CD8-positive, alpha-beta T cell (primary cell): ENCODE measurements at regions of chr15 and their contacts with region 1.

Region 1: DNA sequence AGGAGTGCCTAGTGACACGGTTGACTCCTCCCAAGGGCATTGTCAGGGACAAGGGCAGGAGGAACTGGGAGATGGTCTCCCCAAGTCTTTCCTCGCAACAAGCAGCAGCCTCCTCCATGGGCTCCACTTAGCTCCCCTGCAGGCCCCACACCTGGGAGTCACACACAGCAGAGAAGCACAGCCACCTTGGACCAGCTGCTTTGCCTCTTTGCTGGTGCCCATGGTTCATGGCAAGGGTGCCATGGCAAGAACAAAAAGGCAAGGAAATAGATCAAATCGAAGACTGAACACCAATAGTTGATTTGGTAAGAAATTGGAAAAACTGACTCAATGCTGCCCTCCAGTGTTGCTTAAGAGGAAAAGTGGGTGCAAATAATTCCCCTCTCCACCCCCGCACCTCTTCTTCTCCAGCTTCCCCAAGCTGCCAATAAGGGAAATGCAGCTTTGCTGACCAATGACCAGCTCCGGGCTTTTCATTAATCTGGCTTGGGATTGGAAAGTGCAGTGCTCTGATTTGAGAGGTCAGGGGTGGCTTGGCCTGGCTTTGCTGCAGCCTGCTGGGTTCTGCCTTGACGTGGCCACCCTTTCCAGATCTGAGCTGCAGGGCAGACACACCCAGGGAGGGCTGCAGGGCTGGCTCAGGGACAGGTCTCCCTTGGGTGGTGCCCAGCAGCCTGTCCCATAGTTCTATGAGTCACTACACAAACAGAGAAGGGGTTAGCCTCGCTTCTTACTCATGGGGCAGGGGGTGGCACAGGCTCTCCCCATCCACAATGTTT is 162.0 kb downstream of the KLF13 start:
- DNase-seq: peak in 6 of 9 experiments; percentile 29 to 88 (median 56)
- ATAC-seq: peak; percentile 59
- H3K4me3 ChIP-seq: no peak overlapping the region
- H3K4me3 Mint-ChIP-seq: no peak overlapping the region
- H3K27ac ChIP-seq: no peak overlapping the region
- H3K27ac Mint-ChIP-seq: no peak overlapping the region
- H3K4me1 ChIP-seq: peaks cover 30% of the 10 kb centered on the region
- H3K4me1 Mint-ChIP-seq: peaks cover 39% of the 10 kb centered on the region
- H3K27me3 ChIP-seq: no peaks in the 10 kb centered on the region
- H3K27me3 Mint-ChIP-seq: no peaks in the 10 kb centered on the region
- CTCF ChIP-seq: peak; percentile 88

Region 2: GRCh38 chr15:31215490-31216214 is 273.0 kb before region 1 on chr15:
- CTCF ChIA-PET with region 1: interaction called, 95 read pairs
- POLR2A ChIA-PET with region 1: interaction called, 8 read pairs
- intact Hi-C with region 1: loop called (anchors 1 kb)
- DNase-seq: peak; percentile 56 to 91 (median 84)
- ATAC-seq: peak; percentile 76
- H3K4me3 ChIP-seq: peak overlapping the region; percentile 32 to 55
- H3K4me3 Mint-ChIP-seq: peak overlapping the region; percentile 56
- H3K27ac ChIP-seq: peak overlapping the region; percentile 56 to 75
- H3K27ac Mint-ChIP-seq: peak overlapping the region; percentile 83
- H3K4me1 ChIP-seq: peaks cover 21% of the 10 kb centered on the region
- H3K4me1 Mint-ChIP-seq: peaks cover 30% of the 10 kb centered on the region
- H3K27me3 ChIP-seq: no peaks in the 10 kb centered on the region
- H3K27me3 Mint-ChIP-seq: no peaks in the 10 kb centered on the region
- CTCF ChIP-seq: peak; percentile 73

Region 3: GRCh38 chr15:31317421-31318327 is 170.9 kb before region 1 on chr15:
- CTCF ChIA-PET with region 1: interaction called, 14 read pairs
- POLR2A ChIA-PET with region 1: no interaction called
- intact Hi-C with region 1: no loop called
- DNase-seq: no peak
- ATAC-seq: no peak
- H3K4me3 ChIP-seq: no peak overlapping the region
- H3K4me3 Mint-ChIP-seq: no peak overlapping the region
- H3K27ac ChIP-seq: no peak overlapping the region
- H3K27ac Mint-ChIP-seq: no peak overlapping the region
- H3K4me1 ChIP-seq: peaks cover 23% of the 10 kb centered on the region
- H3K4me1 Mint-ChIP-seq: peaks cover 39% of the 10 kb centered on the region
- H3K27me3 ChIP-seq: no peaks in the 10 kb centered on the region
- H3K27me3 Mint-ChIP-seq: no peaks in the 10 kb centered on the region
- CTCF ChIP-seq: no peak

Region 4: GRCh38 chr15:31352911-31353811 is 135.5 kb before region 1 on chr15:
- CTCF ChIA-PET with region 1: interaction called, 50 read pairs
- POLR2A ChIA-PET with region 1: interaction called, 38 read pairs
- intact Hi-C with region 1: loop called (anchors 5 kb)
- DNase-seq: peak in 6 of 9 experiments; percentile 56 to 88 (median 71)
- ATAC-seq: peak; percentile 61
- H3K4me3 ChIP-seq: peak overlapping the region; percentile 19 to 33
- H3K4me3 Mint-ChIP-seq: peak overlapping the region; percentile 79
- H3K27ac ChIP-seq: peak overlapping the region; percentile 58 to 78
- H3K27ac Mint-ChIP-seq: peak overlapping the region; percentile 97
- H3K4me1 ChIP-seq: peaks cover 100% of the 10 kb centered on the region
- H3K4me1 Mint-ChIP-seq: peaks cover 98% of the 10 kb centered on the region
- H3K27me3 ChIP-seq: no peaks in the 10 kb centered on the region
- H3K27me3 Mint-ChIP-seq: no peaks in the 10 kb centered on the region
- CTCF ChIP-seq: no peak

Region 5: GRCh38 chr15:31396881-31397560 is 91.6 kb before region 1 on chr15:
- CTCF ChIA-PET with region 1: interaction called, 23 read pairs
- POLR2A ChIA-PET with region 1: interaction called, 9 read pairs
- intact Hi-C with region 1: loop called (anchors 2 to 5 kb)
- DNase-seq: peak in 1 of 9 experiments; percentile 42
- ATAC-seq: no peak
- H3K4me3 ChIP-seq: no peak overlapping the region
- H3K4me3 Mint-ChIP-seq: no peak overlapping the region
- H3K27ac ChIP-seq: no peak overlapping the region
- H3K27ac Mint-ChIP-seq: no peak overlapping the region
- H3K4me1 ChIP-seq: peaks cover 39% of the 10 kb centered on the region
- H3K4me1 Mint-ChIP-seq: peaks cover 48% of the 10 kb centered on the region
- H3K27me3 ChIP-seq: no peaks in the 10 kb centered on the region
- H3K27me3 Mint-ChIP-seq: no peaks in the 10 kb centered on the region
- CTCF ChIP-seq: no peak

Region 6: DNA sequence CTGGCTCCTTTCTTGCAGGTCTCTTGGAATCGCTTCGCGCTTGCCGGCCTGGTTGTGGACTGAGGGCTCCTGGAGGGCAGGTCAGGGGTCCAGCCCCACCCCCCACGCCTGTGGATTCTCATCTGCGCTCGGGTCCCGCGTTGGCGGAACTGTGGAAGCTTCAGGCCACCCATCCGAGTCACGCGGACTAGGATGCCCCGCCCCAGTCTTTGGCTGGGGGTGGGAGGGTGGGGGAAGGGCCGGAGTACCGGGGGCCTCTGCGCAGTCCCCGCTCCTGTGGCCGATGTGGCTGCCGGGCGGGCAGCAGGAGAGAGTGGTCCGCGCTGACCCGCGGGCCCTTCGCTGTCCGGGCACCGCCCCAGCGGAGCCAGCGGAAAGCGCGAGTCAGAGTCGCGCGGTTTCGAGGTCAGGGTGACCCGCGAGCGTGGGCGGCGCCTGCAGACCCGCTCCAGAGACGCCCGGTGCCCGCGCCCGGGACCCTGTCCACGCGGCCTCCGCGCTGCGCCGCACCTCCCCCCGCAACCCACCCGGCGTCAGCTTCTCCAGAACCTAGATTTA is 47.8 kb before region 1 on chr15:
- CTCF ChIA-PET with region 1: interaction called, 149 read pairs
- POLR2A ChIA-PET with region 1: interaction called, 65 read pairs
- intact Hi-C with region 1: loop called (anchors 1 kb)
- DNase-seq: peak in 6 of 9 experiments; percentile 41 to 72 (median 46)
- ATAC-seq: peak; percentile 36
- H3K4me3 ChIP-seq: peak overlapping the region; percentile 47 to 57
- H3K4me3 Mint-ChIP-seq: peak overlapping the region; percentile 64
- H3K27ac ChIP-seq: peak overlapping the region; percentile 45 to 53
- H3K27ac Mint-ChIP-seq: peak overlapping the region; percentile 79
- H3K4me1 ChIP-seq: peaks cover 56% of the 10 kb centered on the region
- H3K4me1 Mint-ChIP-seq: peaks cover 60% of the 10 kb centered on the region
- H3K27me3 ChIP-seq: no peaks in the 10 kb centered on the region
- H3K27me3 Mint-ChIP-seq: no peaks in the 10 kb centered on the region
- CTCF ChIP-seq: no peak

Region 7: DNA sequence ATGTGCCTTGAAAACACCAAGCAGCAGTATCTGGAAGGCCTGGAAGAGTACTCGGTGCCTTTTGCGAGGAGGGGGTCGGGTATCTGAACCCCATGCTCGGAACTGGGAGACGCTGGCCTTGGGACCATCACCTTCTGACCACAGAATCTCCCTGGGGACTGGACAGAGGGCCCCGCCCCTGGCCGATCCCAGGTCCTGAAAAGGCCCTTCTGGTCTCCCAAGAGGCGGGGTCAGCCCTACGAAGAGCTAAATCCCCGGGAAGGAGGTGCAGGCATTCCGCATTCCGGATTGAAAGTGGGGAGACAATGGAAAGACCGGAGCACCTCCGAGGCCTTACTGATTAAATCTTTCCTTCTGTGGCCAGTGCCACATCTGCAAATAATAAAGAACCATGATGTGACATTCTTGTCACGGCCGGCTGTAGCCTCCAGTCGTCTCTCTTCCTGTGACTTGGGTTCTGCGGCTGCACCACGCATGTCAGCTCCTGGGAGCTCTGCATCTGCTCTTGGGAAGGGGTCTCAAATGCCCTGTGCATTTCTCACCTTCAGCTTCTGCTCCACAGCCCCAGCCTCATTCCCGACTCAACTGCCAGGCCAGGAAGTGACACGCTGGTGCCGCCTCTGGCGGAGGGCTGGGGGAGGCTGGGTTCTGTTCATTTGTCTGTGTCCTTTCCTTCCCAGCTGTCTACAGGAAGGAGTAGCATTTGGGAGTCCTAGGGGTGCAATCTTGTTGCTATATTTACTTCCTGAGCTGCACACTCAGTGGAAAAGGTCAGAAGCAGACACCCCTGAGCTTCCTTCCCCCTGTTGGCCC is 11.5 kb after region 1 on chr15:
- CTCF ChIA-PET with region 1: interaction called, 13 read pairs
- POLR2A ChIA-PET with region 1: no interaction called
- intact Hi-C with region 1: no loop called
- DNase-seq: peak in 1 of 9 experiments; percentile 41
- ATAC-seq: no peak
- H3K4me3 ChIP-seq: no peak overlapping the region
- H3K4me3 Mint-ChIP-seq: no peak overlapping the region
- H3K27ac ChIP-seq: no peak overlapping the region
- H3K27ac Mint-ChIP-seq: no peak overlapping the region
- H3K4me1 ChIP-seq: no peaks in the 10 kb centered on the region
- H3K4me1 Mint-ChIP-seq: no peaks in the 10 kb centered on the region
- H3K27me3 ChIP-seq: no peaks in the 10 kb centered on the region
- H3K27me3 Mint-ChIP-seq: no peaks in the 10 kb centered on the region
- CTCF ChIP-seq: no peak

Region 8: GRCh38 chr15:31840849-31841476 is 352.3 kb after region 1 on chr15:
- CTCF ChIA-PET with region 1: no interaction called
- POLR2A ChIA-PET with region 1: no interaction called
- intact Hi-C with region 1: no loop called
- DNase-seq: no peak
- ATAC-seq: no peak
- H3K4me3 ChIP-seq: no peak overlapping the region
- H3K4me3 Mint-ChIP-seq: no peak overlapping the region
- H3K27ac ChIP-seq: no peak overlapping the region
- H3K27ac Mint-ChIP-seq: no peak overlapping the region
- H3K4me1 ChIP-seq: no peaks in the 10 kb centered on the region
- H3K4me1 Mint-ChIP-seq: no peaks in the 10 kb centered on the region
- H3K27me3 ChIP-seq: no peaks in the 10 kb centered on the region
- H3K27me3 Mint-ChIP-seq: peaks cover 5% of the 10 kb centered on the region
- CTCF ChIP-seq: no peak